ENCODE measurements at regions of chr12 and their contacts with region 1.

Region 1: GRCh38 chr12:39443081-39443928 is at the start of gene KIF21A:
- DNase-seq: peak; percentile 85 to 89
- ATAC-seq: peak; percentile 94 to 99 (median 96)
- H3K4me3 ChIP-seq: peak within 1 kb of the TSS; percentile 77 to 92 (median 86)
- H3K27ac ChIP-seq: peak within 1 kb of the TSS; percentile 66 to 93 (median 89)
- H3K4me1 ChIP-seq: peaks cover 3 to 24% (median 15%) of the 10 kb centered on the region in 9 donors
- H3K27me3 ChIP-seq: peaks cover 0 to 23% (median 0%) of the 10 kb centered on the region in 7 donors
- CTCF ChIP-seq: peak; percentile 39 to 75 (median 68)
- total RNA-seq, gene KIF21A: 42.3 to 71.8 (median 49.9) TPM

Region 2: GRCh38 chr12:39329018-39329417 is 114.3 kb before region 1 on chr12:
- intact Hi-C with region 1: loop called in 2 of 10 experiments (anchors 10 kb)
- DNase-seq: no peak
- ATAC-seq: no peak
- H3K4me3 ChIP-seq: no peak overlapping the region
- H3K27ac ChIP-seq: no peak overlapping the region
- H3K4me1 ChIP-seq: peaks cover 0 to 15% (median 5%) of the 10 kb centered on the region in 9 donors
- H3K27me3 ChIP-seq: no peaks in the 10 kb centered on the region
- CTCF ChIP-seq: no peak

Region 3: DNA sequence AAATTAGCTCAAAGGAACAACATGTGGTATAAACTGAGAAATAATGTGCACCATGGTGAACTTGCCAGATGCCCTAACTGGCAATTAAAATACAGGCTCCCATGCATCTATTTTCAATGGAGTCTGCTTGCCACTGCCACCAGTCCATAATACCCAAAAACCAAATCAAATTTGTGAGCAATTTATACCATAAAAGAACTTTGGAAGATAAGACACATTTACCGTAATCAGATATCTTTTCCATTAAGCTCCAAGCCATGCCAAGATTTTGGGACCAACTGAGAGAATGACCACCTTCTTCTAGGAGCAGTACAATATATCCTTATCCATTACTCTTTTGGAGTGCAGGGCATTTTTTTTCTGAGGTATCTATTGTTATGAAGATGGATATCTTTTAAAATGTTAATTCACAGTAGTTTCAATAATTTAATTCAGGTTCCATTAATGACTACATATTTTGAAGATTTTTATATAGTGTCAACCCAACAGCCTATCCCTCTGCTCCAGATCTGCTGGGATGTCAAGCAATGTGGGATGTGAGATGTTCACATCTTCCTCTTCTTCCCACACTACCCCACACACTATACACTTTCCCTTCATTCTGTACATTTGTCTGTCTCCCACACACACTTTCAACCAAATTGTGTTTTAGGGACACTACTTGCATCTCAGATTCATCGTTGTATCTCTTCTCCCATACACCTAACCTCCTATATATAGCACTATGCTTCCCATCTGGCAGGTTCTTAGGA is 53.7 kb before region 1 on chr12:
- intact Hi-C with region 1: loop called in 1 of 10 experiments (anchors 5 kb)
- DNase-seq: no peak
- ATAC-seq: no peak
- H3K4me3 ChIP-seq: no peak overlapping the region
- H3K27ac ChIP-seq: no peak overlapping the region
- H3K4me1 ChIP-seq: peaks cover 0 to 55% (median 35%) of the 10 kb centered on the region in 9 donors
- H3K27me3 ChIP-seq: no peaks in the 10 kb centered on the region
- CTCF ChIP-seq: no peak

Region 4: DNA sequence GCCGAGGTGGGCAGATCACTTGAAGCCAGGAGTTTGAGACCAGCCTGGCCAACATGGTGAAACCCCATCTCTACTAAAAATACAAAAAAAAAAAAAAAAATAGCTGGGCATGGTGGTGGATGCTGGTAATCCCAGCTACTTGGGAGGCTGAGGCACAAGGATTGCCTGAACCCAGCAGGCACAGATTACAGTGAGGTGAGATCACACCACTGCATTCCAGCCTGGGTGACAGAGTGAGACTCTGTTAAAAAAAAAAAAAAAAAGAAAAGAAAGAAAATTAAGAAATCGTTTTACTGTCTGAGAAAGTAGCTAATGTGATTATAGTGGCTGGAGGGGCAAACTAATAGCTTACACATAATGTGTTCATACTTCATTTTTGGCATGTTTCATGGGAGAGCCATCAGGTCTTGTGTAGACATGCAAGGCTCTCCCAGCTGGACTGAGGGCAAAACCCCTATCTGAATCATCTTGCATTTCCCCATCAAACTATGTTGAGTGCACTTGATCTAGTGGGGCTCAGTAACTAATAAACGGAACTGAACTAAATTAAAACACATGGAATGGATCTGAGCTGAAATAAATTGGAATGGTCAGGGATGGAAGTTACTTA is 16.6 kb before region 1 on chr12:
- intact Hi-C with region 1: loop called in 1 of 10 experiments (anchors 2 kb)
- DNase-seq: no peak
- ATAC-seq: no peak
- H3K4me3 ChIP-seq: no peak overlapping the region
- H3K27ac ChIP-seq: no peak overlapping the region
- H3K4me1 ChIP-seq: peaks cover 0 to 24% (median 6%) of the 10 kb centered on the region in 9 donors
- H3K27me3 ChIP-seq: no peaks in the 10 kb centered on the region
- CTCF ChIP-seq: no peak

Region 5: GRCh38 chr12:39712334-39712733 is 269.0 kb after region 1 on chr12:
- intact Hi-C with region 1: no loop called
- DNase-seq: no peak
- ATAC-seq: no peak
- H3K4me3 ChIP-seq: no peak overlapping the region
- H3K27ac ChIP-seq: no peak overlapping the region
- H3K4me1 ChIP-seq: no peaks in the 10 kb centered on the region
- H3K27me3 ChIP-seq: no peaks in the 10 kb centered on the region
- CTCF ChIP-seq: no peak

Measured in heart right ventricle (tissue), 16 donors.